Activated B cell treated with CpG ODN at 0.5 μM for 24 hours (primary cell): ENCODE measurements at regions of chr1 and their contacts with region 1.

Region 1: GRCh38 chr1:248873409-248873992 is 14.6 kb upstream of the ZNF692 start:
- DNase-seq: peak; percentile 91
- ATAC-seq: peak; percentile 80
- H3K4me3 Mint-ChIP-seq: peak overlapping the region; percentile 95
- H3K27ac Mint-ChIP-seq: peak overlapping the region; percentile 97
- H3K4me1 Mint-ChIP-seq: peaks cover 19% of the 10 kb centered on the region
- H3K27me3 Mint-ChIP-seq: peaks cover 8% of the 10 kb centered on the region
- CTCF ChIP-seq: no peak

Region 2: GRCh38 chr1:248858891-248859889 is 14.3 kb before region 1 on chr1 and contains the start of gene ZNF692:
- CTCF ChIA-PET with region 1: interaction called, 7 read pairs
- POLR2A ChIA-PET with region 1: interaction called, 68 read pairs
- intact Hi-C with region 1: loop called (anchors 1 kb)
- DNase-seq: peak; percentile 97
- ATAC-seq: peak; percentile 88
- H3K4me3 Mint-ChIP-seq: peak within 1 kb of the TSS; percentile 87
- H3K27ac Mint-ChIP-seq: peak within 1 kb of the TSS; percentile 97
- H3K4me1 Mint-ChIP-seq: peaks cover 55% of the 10 kb centered on the region
- H3K27me3 Mint-ChIP-seq: no peaks in the 10 kb centered on the region
- CTCF ChIP-seq: no peak
- total RNA-seq, gene ZNF692: 36.4 and 40.3 TPM in 2 replicates